ENCODE measurements at regions of chr12 and their contacts with region 1.

Region 1: GRCh38 chr12:108514973-108515814 is at the start of gene FICD:
- DNase-seq: peak; percentile 100
- total RNA-seq, gene FICD: 3.8 TPM

Region 2: DNA sequence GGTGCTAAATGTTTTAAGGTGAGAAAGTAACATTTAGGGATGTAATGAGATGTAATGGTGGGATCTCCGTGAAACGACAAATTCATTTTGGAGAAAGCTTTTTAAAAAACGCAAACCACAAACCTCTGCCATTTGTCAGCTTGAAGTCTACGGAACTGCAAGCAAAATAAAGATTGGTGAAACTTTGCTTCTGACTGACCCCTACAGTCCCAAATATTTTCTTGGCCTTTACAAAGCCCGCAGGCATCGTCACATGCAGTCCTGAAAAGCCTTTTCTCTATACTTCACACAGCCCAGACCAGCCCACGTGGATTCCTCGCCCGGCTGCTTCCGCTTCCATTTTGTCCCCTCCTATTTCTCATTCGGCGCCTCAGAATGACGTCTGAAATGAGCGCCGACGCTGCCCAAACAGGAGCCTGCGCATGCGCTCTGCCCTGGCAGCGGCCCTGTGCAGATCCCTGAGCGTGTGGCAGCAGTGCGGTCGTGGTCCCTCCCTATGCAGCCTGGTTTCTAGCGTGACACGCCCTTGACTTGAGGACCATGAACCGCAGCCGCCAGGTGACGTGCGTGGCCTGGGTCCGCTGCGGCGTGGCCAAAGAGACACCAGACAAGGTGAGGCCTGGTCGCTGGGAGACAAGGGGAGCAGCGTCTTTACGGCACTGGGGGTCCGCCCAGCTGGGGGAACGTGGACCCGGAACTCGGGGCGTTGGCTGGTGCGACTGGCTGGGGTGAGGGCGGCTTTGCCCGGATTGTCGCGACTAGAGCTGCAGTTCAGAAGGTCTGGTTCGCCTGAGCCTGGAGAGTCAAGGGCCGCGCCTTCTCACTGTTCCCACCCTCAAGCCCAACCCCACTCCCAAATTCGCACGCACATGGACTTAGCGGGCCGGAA is 829.6 kb before region 1 on chr12 and contains the start of gene PWP1:
- intact Hi-C with region 1: loop called (anchors 10 kb)
- DNase-seq: peak; percentile 97
- total RNA-seq, gene PWP1: 13.5 TPM

Region 3: DNA sequence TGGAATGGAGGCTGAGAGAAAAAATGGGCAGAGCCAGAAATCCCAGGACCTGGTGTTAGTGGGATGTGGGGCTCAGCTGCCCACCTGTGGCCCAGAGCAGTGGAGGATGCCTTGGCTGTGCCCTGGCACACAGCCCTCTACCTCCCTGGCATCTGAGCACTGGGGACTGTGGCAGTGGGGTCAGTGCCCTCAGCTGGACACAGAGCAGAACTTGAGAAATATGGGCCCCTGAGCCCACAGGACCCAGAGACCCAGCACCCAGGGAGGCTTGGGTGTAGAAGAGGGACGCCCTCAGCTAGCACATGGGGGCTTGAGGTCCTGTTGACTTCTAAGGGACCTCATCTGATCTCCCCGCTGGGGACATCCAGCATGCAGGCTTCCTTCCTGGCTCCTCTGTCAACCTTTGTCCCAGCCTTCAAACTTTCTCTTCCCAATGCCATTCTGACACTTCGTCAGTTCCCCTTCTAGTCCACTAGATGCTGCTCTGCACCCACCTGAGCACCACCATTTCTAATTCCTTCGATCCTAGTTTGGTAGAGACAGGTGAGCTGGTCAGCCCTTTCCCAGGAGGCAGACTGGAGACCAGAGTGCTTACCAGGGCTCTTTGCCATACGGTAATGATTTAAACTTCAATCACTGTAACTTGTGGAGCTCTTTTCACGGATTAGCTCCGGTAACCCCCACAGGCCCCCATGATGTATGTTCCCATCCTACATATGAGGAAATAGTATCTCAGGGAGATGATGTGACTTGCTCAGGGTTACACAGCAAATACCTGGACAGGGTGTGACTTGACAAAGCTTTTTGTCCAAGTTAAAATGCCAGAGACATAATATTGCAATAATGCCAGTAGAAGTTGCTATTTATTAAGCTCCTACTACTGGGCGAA is 597.0 kb before region 1 on chr12:
- intact Hi-C with region 1: loop called (anchors 5 kb)
- DNase-seq: no peak

Region 4: GRCh38 chr12:107992870-107993451 is 522.2 kb before region 1 on chr12:
- intact Hi-C with region 1: loop called (anchors 5 kb)
- DNase-seq: no peak

Region 5: DNA sequence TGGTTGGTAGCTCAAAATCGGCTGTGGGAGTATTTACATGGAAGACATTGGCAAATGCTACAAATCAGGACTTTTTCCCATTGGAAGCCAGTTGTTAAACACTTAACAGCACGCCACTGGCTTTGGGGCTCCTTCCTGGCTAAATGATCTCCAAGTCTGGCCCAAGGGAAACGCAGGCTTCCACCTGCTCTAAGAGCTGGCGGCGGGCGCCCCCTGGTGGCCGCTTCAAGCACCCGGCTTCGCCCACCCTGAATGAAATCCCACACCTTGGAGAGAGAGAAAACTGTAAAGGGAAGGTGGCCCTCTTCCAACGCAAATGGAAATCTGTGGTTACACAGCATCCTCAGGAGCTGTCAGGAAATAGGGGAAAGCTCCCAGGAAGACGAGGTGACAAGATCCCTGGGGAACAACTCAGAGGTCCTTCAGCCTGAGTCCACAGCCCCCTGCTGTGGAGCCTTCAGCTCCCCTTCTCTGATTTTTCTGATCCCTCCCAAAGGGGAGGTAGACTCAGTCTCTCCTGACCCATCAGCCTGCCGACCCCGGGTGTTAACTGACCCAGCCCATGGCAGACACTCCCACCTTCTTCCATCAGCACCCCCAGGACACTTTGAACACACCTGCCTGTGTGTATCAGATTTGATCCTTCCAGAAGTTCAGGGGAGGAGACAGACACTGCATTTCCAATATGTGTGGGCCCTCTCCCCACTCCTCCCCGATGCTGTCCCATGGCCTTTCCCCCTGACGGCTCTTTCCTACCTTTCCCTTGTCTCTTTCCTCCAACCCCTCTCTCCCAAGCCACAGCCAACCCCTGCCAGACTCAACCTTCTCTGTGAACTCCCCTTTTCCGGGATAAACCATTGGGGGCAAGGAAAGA is 103.1 kb after region 1 on chr12:
- intact Hi-C with region 1: loop called (anchors 10 kb)
- DNase-seq: peak; percentile 88

Region 6: DNA sequence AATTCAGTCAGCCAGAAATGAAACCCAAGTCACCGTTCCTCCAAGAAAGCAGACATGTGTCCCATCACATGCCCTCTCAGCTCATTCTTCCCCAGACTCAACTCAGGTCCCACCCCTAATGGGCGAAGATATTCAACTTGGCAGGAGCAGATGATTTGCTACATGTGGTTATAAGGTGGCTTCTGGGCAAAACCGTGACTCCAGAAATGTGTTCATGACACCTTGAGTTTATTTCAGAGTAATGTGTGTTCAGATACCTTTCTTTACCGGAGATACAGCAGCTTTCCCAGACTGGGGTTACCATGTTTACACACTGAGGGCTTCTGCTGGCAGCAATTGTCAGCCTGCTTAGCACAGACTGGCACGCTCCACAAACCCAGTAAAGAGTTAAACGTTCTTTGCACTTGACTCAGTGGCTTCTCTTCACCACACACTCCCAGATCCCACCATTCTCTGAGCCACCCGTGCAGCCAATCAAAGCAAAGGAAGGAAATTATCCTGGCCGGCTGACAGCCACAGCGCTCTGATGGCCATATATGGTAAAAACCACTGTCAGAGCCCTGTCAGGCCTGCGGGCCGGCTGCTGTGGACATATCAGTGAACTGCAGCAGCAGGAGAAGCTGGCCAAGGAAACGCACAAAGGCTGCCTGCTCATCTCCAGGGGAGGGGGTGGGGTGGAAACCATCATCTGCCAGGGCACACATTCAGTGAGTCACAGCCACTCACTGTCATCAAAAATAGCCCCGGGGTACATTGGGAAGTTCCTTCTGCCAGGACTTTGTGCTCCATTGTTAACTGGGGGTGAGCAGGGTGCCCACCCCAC is 176.2 kb after region 1 on chr12:
- intact Hi-C with region 1: no loop called
- DNase-seq: peak; percentile 96